Thyroid gland (tissue), 4 donors: ENCODE measurements at regions of chr12 and their contacts with region 1.

Region 1: GRCh38 chr12:12334367-12335040 is 15.5 kb downstream of the MANSC1 start:
- DNase-seq: peak; percentile 31 to 45
- H3K4me3 ChIP-seq: no peak overlapping the region
- H3K27ac ChIP-seq: no peak overlapping the region
- H3K4me1 ChIP-seq: peaks cover 25 to 32% of the 10 kb centered on the region in 2 donors
- H3K27me3 ChIP-seq: no peaks in the 10 kb centered on the region
- CTCF ChIP-seq: peak; percentile 57 to 68 (median 64)
- POLR2A ChIP-seq: no peak

Region 2: DNA sequence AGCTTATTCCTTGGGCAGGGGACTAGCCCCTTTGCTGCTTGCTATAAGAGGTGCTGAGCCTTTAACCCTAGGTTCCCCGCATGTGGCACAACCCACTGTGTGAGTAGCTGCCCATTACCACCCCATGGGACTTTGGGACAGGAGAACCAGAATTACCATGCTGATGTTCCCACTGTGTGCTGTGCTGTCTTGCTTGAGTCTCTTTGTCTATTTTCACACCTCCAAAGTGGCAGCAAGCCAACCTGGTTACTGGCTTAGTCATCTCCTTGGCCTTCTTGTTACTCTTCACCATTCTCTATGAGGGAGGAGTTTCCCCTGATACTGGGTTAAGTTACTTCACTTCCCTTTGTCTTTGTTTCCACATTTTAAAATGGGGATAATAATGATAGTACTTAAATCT is 758.4 kb before region 1 on chr12:
- intact Hi-C with region 1: loop called (anchors 10 kb)
- DNase-seq: no peak
- H3K4me3 ChIP-seq: no peak overlapping the region
- H3K27ac ChIP-seq: no peak overlapping the region
- H3K4me1 ChIP-seq: peaks cover 10 to 15% of the 10 kb centered on the region in 2 donors
- H3K27me3 ChIP-seq: no peaks in the 10 kb centered on the region
- CTCF ChIP-seq: no peak
- POLR2A ChIP-seq: no peak

Region 3: DNA sequence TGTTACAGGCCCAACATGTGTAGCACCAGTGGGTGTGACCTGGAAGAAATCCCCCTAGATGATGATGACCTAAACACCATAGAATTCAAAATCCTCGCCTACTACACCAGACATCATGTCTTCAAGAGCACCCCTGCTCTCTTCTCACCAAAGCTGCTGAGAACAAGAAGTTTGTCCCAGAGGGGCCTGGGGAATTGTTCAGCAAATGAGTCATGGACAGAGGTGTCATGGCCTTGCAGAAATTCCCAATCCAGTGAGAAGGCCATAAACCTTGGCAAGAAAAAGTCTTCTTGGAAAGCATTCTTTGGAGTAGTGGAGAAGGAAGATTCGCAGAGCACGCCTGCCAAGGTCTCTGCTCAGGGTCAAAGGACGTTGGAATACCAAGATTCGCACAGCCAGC is 255.2 kb before region 1 on chr12:
- intact Hi-C with region 1: loop called (anchors 5 kb)
- DNase-seq: no peak
- H3K4me3 ChIP-seq: no peak overlapping the region
- H3K27ac ChIP-seq: no peak overlapping the region
- H3K4me1 ChIP-seq: no peaks in the 10 kb centered on the region
- H3K27me3 ChIP-seq: no peaks in the 10 kb centered on the region
- CTCF ChIP-seq: no peak
- POLR2A ChIP-seq: no peak

Region 4: GRCh38 chr12:12266873-12267741 is 67.4 kb before region 1 on chr12 and contains the start of gene LRP6:
- intact Hi-C with region 1: loop called (anchors 10 kb)
- DNase-seq: peak; percentile 91 to 93
- H3K4me3 ChIP-seq: peak within 1 kb of the TSS; percentile 77 to 93 (median 78)
- H3K27ac ChIP-seq: peak within 1 kb of the TSS; percentile 99 to 100 (median 100)
- H3K4me1 ChIP-seq: peaks cover 9 to 15% of the 10 kb centered on the region in 2 donors
- H3K27me3 ChIP-seq: no peaks in the 10 kb centered on the region
- CTCF ChIP-seq: peak in 1 of 6 experiments; percentile 3
- POLR2A ChIP-seq: peak; percentile 31 to 85
- total RNA-seq, gene LRP6: 38.7 to 47.7 (median 42.7) TPM

Region 5: GRCh38 chr12:12384571-12385340 is 50.3 kb after region 1 on chr12:
- intact Hi-C with region 1: no loop called
- DNase-seq: no peak
- H3K4me3 ChIP-seq: no peak overlapping the region
- H3K27ac ChIP-seq: no peak overlapping the region
- H3K4me1 ChIP-seq: peaks cover 0 to 2% of the 10 kb centered on the region in 2 donors
- H3K27me3 ChIP-seq: no peaks in the 10 kb centered on the region
- CTCF ChIP-seq: no peak
- POLR2A ChIP-seq: no peak

Region 6: GRCh38 chr12:12415886-12416285 is 81.4 kb after region 1 on chr12:
- intact Hi-C with region 1: no loop called
- DNase-seq: no peak
- H3K4me3 ChIP-seq: no peak overlapping the region
- H3K27ac ChIP-seq: no peak overlapping the region
- H3K4me1 ChIP-seq: no peaks in the 10 kb centered on the region
- H3K27me3 ChIP-seq: no peaks in the 10 kb centered on the region
- CTCF ChIP-seq: no peak
- POLR2A ChIP-seq: no peak